ENCODE measurements at regions of chr15 and their contacts with region 1.

Region 1: DNA sequence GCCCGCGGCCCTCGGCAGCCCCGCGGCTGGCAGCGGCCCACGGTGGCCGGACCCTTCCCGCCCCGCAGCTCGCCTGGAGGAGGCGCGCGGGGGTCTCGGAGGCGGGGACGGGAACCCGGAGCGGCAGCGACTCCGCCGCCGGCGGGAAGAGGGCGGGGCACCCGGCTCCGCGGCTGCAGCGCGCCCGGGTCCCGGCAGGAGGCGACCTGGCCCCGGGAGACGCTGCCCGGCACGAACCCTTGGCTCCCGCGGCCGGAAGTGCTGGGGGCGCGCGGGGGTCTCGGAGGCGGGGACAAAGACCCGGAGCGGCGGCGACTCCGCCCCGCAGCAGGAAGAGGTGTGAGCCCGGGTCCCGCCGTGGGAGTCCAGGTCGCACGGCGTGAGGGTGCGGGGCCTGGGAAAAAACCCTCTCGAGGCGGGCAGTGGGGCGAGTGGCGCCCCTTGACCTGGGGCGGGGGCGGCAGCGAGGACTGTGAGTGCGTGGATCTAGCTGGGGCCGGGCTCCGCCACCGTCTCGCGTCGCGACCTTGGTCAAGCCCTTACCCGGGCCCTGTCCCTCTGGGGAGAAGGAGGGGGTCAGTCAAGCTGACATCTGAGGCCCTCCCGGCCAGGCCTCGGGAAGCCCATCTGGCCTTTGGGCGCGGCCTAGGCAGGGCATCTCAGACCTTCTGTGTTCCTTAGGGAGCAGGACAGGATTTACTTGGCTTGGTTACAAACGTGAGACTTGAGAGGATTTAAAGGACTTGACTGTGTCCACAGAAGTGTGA is at the start of gene CIB2:
- DNase-seq: peak; percentile 73 to 88 (median 83)
- H3K4me3 ChIP-seq: peak within 1 kb of the TSS; percentile 48
- H3K27ac ChIP-seq: peak within 1 kb of the TSS; percentile 78 to 89
- H3K4me1 ChIP-seq: no peaks in the 10 kb centered on the region
- H3K27me3 ChIP-seq: no peaks in the 10 kb centered on the region
- CTCF ChIP-seq: peak; percentile 75 to 91 (median 84)
- EP300 ChIP-seq: no peak
- POLR2A ChIP-seq: peak; percentile 35
- total RNA-seq, gene CIB2: 1.7 to 12.4 (median 9.6) TPM

Region 2: DNA sequence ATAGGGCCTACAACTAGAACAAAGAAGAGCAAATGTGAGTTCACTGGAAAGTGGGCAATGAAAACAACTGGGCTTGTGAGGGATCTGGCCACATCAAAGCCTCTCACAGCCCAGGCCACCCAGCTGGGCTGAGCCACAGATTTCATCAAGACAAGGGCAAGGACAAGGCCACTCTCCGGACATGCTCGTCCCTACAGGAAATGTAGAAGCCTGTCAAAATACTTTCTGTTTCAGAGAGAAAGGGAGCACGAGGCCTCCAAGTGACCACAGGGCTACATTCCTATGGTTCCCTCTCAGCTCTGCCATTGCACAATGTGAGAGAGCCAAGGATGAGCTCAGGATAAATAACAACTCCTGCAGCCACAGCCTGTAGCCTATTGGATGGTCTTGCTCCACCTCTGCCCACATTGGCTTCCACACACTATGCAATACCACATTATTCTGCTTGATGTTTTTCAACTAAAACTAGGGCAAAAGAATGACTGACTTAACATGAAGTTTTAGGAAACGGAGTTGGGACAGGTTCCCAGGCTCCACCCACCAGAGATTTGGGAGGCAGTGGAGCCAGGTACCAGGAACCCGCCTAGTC is 66.1 kb before region 1 on chr15:
- intact Hi-C with region 1: no loop called
- DNase-seq: peak; percentile 50 to 82 (median 62)
- H3K4me3 ChIP-seq: peak overlapping the region; percentile 4
- H3K27ac ChIP-seq: peak overlapping the region; percentile 72 to 95
- H3K4me1 ChIP-seq: peaks cover 53% of the 10 kb centered on the region
- H3K27me3 ChIP-seq: no peaks in the 10 kb centered on the region
- CTCF ChIP-seq: no peak
- EP300 ChIP-seq: no peak
- POLR2A ChIP-seq: peak; percentile 49

Region 3: GRCh38 chr15:78195735-78196201 is 64.3 kb after region 1 on chr15:
- intact Hi-C with region 1: loop called in 1 of 4 experiments (anchors 10 kb)
- DNase-seq: no peak
- H3K4me3 ChIP-seq: no peak overlapping the region
- H3K27ac ChIP-seq: no peak overlapping the region
- H3K4me1 ChIP-seq: no peaks in the 10 kb centered on the region
- H3K27me3 ChIP-seq: no peaks in the 10 kb centered on the region
- CTCF ChIP-seq: peak in 1 of 3 donors; percentile 19
- EP300 ChIP-seq: no peak
- POLR2A ChIP-seq: no peak

Region 4: DNA sequence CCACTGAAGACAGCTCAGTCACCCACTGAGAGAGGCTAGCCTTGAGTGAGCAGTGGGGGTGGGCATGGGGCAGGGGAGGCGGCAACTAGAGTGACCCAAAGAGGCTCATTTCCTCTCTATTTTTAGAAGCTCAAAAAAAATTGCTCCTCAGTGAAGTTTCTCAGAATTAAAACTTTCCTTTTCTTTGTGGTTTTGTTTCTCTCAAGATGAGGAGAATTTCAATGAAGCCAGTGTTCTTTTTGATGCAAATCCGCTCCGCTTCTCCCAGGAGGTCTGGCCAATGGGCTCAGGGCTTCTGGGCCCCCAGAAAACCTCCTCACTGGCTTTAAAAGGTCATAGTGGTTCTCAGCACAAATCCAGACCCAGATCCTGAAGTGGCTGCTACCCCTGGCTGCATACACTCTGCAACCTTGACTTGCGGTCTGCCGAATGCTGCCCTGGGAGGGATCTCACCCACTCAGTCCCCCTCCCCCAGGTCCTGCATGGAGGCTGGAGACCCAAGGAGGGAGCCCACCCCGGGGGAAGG is 103.1 kb after region 1 on chr15 and contains the start of gene ACSBG1:
- intact Hi-C with region 1: loop called in 1 of 4 experiments (anchors 10 kb)
- DNase-seq: no peak
- H3K4me3 ChIP-seq: no peak within 1 kb of the TSS
- H3K27ac ChIP-seq: no peak within 1 kb of the TSS
- H3K4me1 ChIP-seq: no peaks in the 10 kb centered on the region
- H3K27me3 ChIP-seq: no peaks in the 10 kb centered on the region
- CTCF ChIP-seq: no peak
- EP300 ChIP-seq: no peak
- POLR2A ChIP-seq: no peak
- total RNA-seq, gene ACSBG1: 0.15 to 2.2 (median 0.57) TPM in 5 of 7 donors, not detected in the others

Region 5: GRCh38 chr15:78241007-78241406 is 109.5 kb after region 1 on chr15:
- intact Hi-C with region 1: loop called (anchors 5 to 10 kb)
- DNase-seq: peak; percentile 81 to 92 (median 90)
- H3K4me3 ChIP-seq: no peak overlapping the region
- H3K27ac ChIP-seq: no peak overlapping the region
- H3K4me1 ChIP-seq: no peaks in the 10 kb centered on the region
- H3K27me3 ChIP-seq: no peaks in the 10 kb centered on the region
- CTCF ChIP-seq: peak; percentile 23 to 84 (median 76)
- EP300 ChIP-seq: no peak
- POLR2A ChIP-seq: no peak

Region 6: GRCh38 chr15:78422571-78423340 is 291.3 kb after region 1 on chr15:
- intact Hi-C with region 1: loop called in 1 of 4 experiments (anchors 10 kb)
- DNase-seq: peak; percentile 15 to 69 (median 53)
- H3K4me3 ChIP-seq: no peak overlapping the region
- H3K27ac ChIP-seq: no peak overlapping the region
- H3K4me1 ChIP-seq: peaks cover 3% of the 10 kb centered on the region
- H3K27me3 ChIP-seq: no peaks in the 10 kb centered on the region
- CTCF ChIP-seq: peak; percentile 42 to 65 (median 58)
- EP300 ChIP-seq: no peak
- POLR2A ChIP-seq: no peak